GM12878 (cell line): ENCODE measurements at regions of chr7 and their contacts with region 1.

Region 1: DNA sequence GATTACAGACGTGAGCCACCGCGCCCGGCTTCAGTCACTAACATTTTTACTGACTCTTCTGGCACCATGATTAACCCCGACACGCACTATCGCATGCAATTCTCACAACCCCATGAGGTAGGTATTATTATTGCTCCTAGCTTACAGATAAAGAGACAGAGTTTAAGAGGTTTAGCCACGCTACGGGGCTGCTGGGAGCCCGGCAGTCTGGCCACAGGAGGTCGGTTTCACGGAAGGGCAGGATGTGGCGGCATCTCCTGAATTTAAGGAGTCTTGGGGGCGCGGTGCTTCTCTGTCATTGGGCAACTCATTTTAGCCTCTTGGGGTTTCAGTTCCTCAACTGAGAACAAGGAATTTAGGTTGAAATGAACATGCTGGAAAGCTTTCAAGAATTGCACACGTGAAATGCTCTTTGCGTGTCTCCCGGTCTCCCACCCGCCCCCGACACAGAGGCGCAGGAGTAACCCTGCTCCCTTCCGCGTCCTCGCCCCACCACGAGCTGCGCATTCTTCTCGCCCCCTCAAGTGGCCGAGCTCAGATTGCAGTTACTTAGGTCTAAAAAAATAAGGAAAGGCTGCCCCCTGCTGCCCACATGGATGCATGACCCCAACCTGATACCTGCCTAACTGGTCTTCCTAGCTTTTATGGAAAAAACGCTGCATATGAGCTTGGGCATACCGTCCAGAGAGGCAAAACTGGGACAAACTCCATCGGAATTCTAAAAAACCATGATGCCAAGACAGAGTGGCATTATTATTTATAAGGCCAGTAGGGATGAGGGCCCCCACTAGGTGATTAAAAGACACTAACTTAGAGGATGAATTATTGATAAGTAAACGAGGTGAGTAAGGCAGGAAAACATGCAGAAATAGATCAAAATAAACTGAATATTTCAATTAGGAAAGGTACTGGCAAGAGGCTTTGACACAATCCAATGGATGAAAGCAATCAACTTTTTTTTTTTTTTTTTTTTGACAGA is 12.4 kb downstream of the PRSS2 start:
- DNase-seq: peak; percentile 66
- ATAC-seq: peak; percentile 91
- H3K4me3 ChIP-seq: peak overlapping the region; percentile 65
- H3K27ac ChIP-seq: peak overlapping the region; percentile 45; the same call in 1 of the 2 replicates
- H3K4me1 ChIP-seq: peaks cover 9% of the 10 kb centered on the region
- H3K27me3 ChIP-seq: no peaks in the 10 kb centered on the region
- CTCF ChIP-seq: peak; percentile 91 to 100 (median 97); a peak in 5 of 6 replicates
- EP300 ChIP-seq: peak in 1 of 2 experiments; percentile 32; a peak in 1 of 4 replicates
- POLR2A ChIP-seq: no peak
- RAD21 ChIP-seq: peak; percentile 100

Region 2: DNA sequence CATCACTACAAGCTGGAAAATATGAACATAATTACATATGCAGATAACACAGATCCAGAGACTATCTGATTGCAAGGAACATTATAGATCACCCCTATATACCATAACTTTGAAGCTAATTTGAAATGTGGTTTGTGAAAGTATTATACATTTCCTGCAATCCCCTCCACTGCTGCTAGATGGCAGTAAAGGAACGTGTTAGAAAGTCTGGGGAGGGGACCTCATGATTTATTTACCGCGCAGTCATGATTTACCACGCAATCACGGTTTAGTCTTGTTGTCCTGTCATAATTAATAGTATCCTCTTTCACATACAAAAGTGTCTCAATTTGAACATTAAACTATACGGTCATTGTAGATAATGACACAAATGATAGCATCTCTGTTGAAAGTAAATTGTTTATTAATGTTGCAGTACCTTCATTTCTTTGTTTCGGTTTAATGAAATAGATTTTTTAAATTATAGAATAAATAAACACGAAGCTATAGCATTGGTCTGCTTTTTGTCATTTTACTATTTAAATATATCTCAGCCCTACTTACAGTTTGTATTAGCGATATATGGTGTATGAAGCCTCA is 179.3 kb before region 1 on chr7:
- CTCF ChIA-PET with region 1: interaction called, 25 read pairs
- POLR2A ChIA-PET with region 1: no interaction called
- RAD21 ChIA-PET with region 1: interaction called, 12 read pairs
- SMC1A ChIA-PET with region 1: interaction called, 12 read pairs
- in situ Hi-C with region 1: no loop called
- intact Hi-C with region 1: loop called (anchors 1 kb)
- DNase-seq: no peak
- ATAC-seq: peak; percentile 74
- H3K4me3 ChIP-seq: no peak overlapping the region
- H3K27ac ChIP-seq: no peak overlapping the region
- H3K4me1 ChIP-seq: no peaks in the 10 kb centered on the region
- H3K27me3 ChIP-seq: no peaks in the 10 kb centered on the region
- CTCF ChIP-seq: peak; percentile 74 to 81 (median 81)
- EP300 ChIP-seq: no peak
- POLR2A ChIP-seq: no peak
- RAD21 ChIP-seq: peak; percentile 82

Region 3: DNA sequence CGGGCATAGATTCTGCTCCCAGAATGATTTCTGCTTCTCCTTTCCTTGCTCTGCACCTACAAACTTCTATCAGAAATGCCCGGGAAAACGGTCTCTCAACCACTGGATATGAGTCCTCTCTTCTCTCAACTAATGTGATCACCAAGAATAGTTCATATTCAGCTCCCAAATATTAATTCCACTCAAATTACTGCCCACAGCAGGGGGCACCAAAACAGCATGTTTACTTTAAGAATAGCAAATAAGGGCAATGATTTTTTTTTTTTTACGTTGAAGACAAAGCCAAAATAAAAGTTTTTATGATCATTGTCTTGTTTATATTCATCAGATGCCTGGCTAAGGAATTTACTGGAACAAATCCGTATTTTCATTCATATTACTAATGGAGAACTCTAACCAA is 128.8 kb before region 1 on chr7:
- CTCF ChIA-PET with region 1: interaction called, 8 read pairs
- POLR2A ChIA-PET with region 1: no interaction called
- RAD21 ChIA-PET with region 1: interaction called, 14 read pairs
- SMC1A ChIA-PET with region 1: interaction called, 5 read pairs
- in situ Hi-C with region 1: no loop called
- intact Hi-C with region 1: no loop called
- DNase-seq: no peak
- ATAC-seq: no peak
- H3K4me3 ChIP-seq: no peak overlapping the region
- H3K27ac ChIP-seq: no peak overlapping the region
- H3K4me1 ChIP-seq: no peaks in the 10 kb centered on the region
- H3K27me3 ChIP-seq: no peaks in the 10 kb centered on the region; a peak in 2 of 4 replicates
- CTCF ChIP-seq: no peak; a peak in 1 of 6 replicates
- EP300 ChIP-seq: no peak
- POLR2A ChIP-seq: no peak
- RAD21 ChIP-seq: no peak

Region 4: GRCh38 chr7:142689439-142690120 is 93.6 kb before region 1 on chr7:
- CTCF ChIA-PET with region 1: interaction called, 53 read pairs
- POLR2A ChIA-PET with region 1: no interaction called
- RAD21 ChIA-PET with region 1: interaction called, 11 read pairs
- SMC1A ChIA-PET with region 1: interaction called, 26 read pairs
- in situ Hi-C with region 1: no loop called
- intact Hi-C with region 1: loop called (anchors 1 kb)
- DNase-seq: no peak
- ATAC-seq: peak; percentile 38
- H3K4me3 ChIP-seq: no peak overlapping the region
- H3K27ac ChIP-seq: no peak overlapping the region
- H3K4me1 ChIP-seq: peaks cover 3% of the 10 kb centered on the region; the same call in 1 of the 2 replicates
- H3K27me3 ChIP-seq: no peaks in the 10 kb centered on the region
- CTCF ChIP-seq: peak in 2 of 3 experiments; percentile 5 to 22; a peak in 1 of 6 replicates
- EP300 ChIP-seq: no peak
- POLR2A ChIP-seq: no peak
- RAD21 ChIP-seq: peak; percentile 24; the same call in 1 of the 2 replicates

Region 5: DNA sequence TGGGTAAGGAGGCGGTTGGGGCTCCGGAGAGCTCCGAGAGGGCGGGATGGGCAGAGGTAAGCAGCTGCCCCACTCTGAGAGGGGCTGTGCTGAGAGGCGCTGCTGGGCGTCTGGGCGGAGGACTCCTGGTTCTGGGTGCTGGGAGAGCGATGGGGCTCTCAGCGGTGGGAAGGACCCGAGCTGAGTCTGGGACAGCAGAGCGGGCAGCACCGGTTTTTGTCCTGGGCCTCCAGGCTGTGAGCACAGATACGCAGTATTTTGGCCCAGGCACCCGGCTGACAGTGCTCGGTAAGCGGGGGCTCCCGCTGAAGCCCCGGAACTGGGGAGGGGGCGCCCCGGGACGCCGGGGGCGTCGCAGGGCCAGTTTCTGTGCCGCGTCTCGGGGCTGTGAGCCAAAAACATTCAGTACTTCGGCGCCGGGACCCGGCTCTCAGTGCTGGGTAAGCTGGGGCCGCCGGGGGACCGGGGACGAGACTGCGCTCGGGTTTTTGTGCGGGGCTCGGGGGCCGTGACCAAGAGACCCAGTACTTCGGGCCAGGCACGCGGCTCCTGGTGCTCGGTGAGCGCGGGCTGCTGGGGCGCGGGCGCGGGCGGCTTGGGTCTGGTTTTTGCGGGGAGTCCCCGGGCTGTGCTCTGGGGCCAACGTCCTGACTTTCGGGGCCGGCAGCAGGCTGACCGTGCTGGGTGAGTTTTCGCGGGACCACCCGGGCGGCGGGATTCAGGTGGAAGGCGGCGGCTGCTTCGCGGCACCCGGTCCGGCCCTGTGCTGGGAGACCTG is 13.6 kb after region 1 on chr7:
- CTCF ChIA-PET with region 1: interaction called, 1,055 read pairs
- POLR2A ChIA-PET with region 1: interaction called, 325 read pairs
- RAD21 ChIA-PET with region 1: interaction called, 115 read pairs
- SMC1A ChIA-PET with region 1: interaction called, 107 read pairs
- in situ Hi-C with region 1: no loop called
- intact Hi-C with region 1: no loop called
- DNase-seq: no peak
- ATAC-seq: peak; percentile 66
- H3K4me3 ChIP-seq: peak overlapping the region; percentile 71
- H3K27ac ChIP-seq: peak overlapping the region; percentile 62
- H3K4me1 ChIP-seq: peaks cover 6% of the 10 kb centered on the region
- H3K27me3 ChIP-seq: no peaks in the 10 kb centered on the region
- CTCF ChIP-seq: no peak
- EP300 ChIP-seq: no peak
- POLR2A ChIP-seq: no peak; the same call in 1 of the 2 replicates
- RAD21 ChIP-seq: no peak

Region 6: DNA sequence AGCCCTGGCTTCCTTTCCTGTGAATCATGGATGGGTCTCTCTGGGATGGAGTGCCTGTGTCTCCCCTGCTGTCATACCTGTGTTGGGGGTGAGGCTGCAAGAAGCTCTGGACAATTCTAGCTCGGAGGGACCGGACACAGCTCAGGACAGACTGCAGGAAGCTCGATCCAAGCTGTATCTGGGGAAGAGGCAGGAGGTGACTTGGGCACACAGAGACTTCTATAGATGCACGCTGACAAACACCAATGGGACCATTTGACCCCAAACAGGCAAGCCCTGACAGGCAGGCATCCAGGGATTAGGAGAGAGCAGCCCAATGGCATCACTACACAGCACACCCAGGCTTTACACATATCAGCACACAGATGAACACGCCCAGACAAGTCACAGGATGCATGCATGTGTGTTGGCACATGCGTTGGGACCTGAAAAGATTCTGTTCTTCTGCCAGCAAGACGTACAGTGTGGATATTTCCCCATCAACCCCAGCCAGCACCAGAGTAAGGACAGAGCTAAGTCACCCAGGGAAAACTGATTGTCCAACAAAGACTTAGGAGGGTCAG is 160.6 kb after region 1 on chr7:
- CTCF ChIA-PET with region 1: no interaction called
- POLR2A ChIA-PET with region 1: no interaction called
- RAD21 ChIA-PET with region 1: no interaction called
- SMC1A ChIA-PET with region 1: no interaction called
- in situ Hi-C with region 1: no loop called
- intact Hi-C with region 1: no loop called
- DNase-seq: no peak
- ATAC-seq: peak; percentile 21; the same call in 1 of the 3 replicates
- H3K4me3 ChIP-seq: no peak overlapping the region
- H3K27ac ChIP-seq: no peak overlapping the region
- H3K4me1 ChIP-seq: no peaks in the 10 kb centered on the region
- H3K27me3 ChIP-seq: no peaks in the 10 kb centered on the region; a peak in 1 of 4 replicates
- CTCF ChIP-seq: no peak
- EP300 ChIP-seq: no peak
- POLR2A ChIP-seq: no peak
- RAD21 ChIP-seq: no peak

Region 7: GRCh38 chr7:143222782-143223181 is 439.6 kb after region 1 on chr7:
- CTCF ChIA-PET with region 1: no interaction called
- POLR2A ChIA-PET with region 1: no interaction called
- RAD21 ChIA-PET with region 1: no interaction called
- SMC1A ChIA-PET with region 1: no interaction called
- in situ Hi-C with region 1: no loop called
- intact Hi-C with region 1: no loop called
- DNase-seq: no peak
- ATAC-seq: no peak
- H3K4me3 ChIP-seq: no peak overlapping the region
- H3K27ac ChIP-seq: no peak overlapping the region
- H3K4me1 ChIP-seq: no peaks in the 10 kb centered on the region
- H3K27me3 ChIP-seq: peaks cover 0 to 6% of the 10 kb centered on the region in 2 experiments
- CTCF ChIP-seq: no peak
- EP300 ChIP-seq: no peak
- POLR2A ChIP-seq: no peak
- RAD21 ChIP-seq: no peak